ENCODE measurements at regions of chr1 and their contacts with region 1.

Region 1: GRCh38 chr1:62508187-62508758 is 71.4 kb downstream of the USP1 start:
- DNase-seq: peak; percentile 60 to 78 (median 77)
- H3K4me3 ChIP-seq: no peak overlapping the region
- H3K27ac ChIP-seq: no peak overlapping the region
- H3K4me1 ChIP-seq: no peaks in the 10 kb centered on the region
- H3K27me3 ChIP-seq: no peaks in the 10 kb centered on the region

Region 2: DNA sequence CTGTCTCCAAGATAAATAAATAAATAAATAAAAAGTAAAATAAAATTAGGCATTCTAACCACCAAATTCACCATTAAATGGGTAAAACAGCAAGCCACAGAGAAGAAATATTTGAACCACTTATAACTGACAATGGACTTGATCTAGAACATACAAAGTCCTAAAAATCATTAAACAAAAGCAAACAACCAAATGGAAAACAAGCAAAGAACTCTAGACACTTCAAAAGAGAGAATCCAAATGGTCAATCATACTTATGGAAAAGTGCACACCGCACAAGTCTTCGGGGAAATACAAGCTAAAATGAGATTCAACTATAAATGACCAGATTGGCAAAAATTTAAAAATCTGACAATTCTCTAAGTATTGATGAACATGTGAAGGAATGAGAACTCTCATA is 15.6 kb after region 1 on chr1:
- CTCF ChIA-PET with region 1: no interaction called
- POLR2A ChIA-PET with region 1: no interaction called
- DNase-seq: no peak
- H3K4me3 ChIP-seq: no peak overlapping the region
- H3K27ac ChIP-seq: no peak overlapping the region
- H3K4me1 ChIP-seq: no peaks in the 10 kb centered on the region
- H3K27me3 ChIP-seq: no peaks in the 10 kb centered on the region

Region 3: DNA sequence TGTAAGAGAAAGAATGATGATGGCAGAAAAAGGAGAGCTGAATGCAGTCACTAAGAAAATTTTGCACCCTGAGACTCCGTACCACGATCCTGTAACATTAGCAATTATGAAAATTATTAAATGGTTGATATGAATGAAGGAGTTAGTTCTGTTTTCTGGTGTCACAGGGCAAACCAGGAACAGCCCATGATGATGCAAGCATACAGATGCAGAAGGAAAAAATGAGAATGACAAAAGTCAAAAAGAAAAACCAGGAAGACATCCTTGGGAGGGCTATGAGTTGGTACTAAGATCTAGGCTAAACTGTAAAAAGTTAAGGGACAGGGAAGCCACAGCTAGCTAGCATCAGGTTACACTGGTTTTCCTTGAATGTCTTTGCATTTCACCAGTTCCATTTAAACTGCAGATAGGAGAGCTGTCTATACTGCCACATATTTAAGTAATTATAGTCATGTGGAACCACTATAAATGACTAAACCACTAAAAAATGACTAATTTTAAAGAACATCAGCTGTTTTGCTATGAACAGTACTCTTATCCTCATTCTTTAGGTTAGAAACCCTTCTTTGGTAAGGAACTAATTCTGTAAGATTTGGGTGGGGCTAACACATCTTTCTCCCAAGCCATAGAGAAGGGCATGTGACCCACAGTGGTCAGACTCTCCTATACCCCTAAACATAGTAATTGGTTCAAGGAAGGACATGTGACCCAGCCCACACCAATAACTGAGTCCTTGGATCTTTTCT is 168.5 kb after region 1 on chr1:
- CTCF ChIA-PET with region 1: no interaction called
- POLR2A ChIA-PET with region 1: no interaction called
- DNase-seq: peak in 1 of 3 donors; percentile 9
- H3K4me3 ChIP-seq: no peak overlapping the region
- H3K27ac ChIP-seq: no peak overlapping the region
- H3K4me1 ChIP-seq: peaks cover 0 to 9% (median 0%) of the 10 kb centered on the region in 4 experiments
- H3K27me3 ChIP-seq: no peaks in the 10 kb centered on the region

Region 4: GRCh38 chr1:62746085-62746808 is 238.0 kb after region 1 on chr1:
- CTCF ChIA-PET with region 1: interaction called, 84 read pairs
- POLR2A ChIA-PET with region 1: no interaction called
- DNase-seq: peak; percentile 53 to 74 (median 69)
- H3K4me3 ChIP-seq: peak overlapping the region in 3 of 7 experiments; percentile 29 to 66 (median 40)
- H3K27ac ChIP-seq: no peak overlapping the region
- H3K4me1 ChIP-seq: peaks cover 0 to 1% (median 0%) of the 10 kb centered on the region in 4 experiments
- H3K27me3 ChIP-seq: no peaks in the 10 kb centered on the region

Measured in common myeloid progenitor, CD34-positive (primary cell).